GM12878 (cell line): ENCODE measurements at regions of chr5 and their contacts with region 1.

Region 1: DNA sequence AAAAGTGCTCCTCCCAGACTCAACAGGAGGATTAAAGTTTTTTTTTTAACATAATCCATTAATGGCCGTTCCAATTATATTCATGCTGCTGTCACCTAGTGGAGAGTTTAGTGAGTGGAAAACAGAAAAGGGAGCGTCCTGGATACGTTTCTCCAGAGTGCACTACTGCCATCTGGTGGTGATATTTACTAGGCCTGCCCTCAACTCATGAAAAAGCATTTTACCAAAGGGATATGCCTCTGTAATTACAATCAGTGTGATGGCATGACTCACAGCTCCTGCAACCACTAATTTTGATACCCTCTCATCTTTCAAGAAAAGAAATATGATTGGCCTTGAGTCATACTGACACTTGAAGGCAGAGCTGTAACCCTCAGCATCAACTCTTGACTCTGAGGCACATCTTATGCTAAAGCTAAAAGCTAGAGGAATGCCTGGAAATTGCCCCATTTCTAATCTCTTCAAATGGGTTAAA is 20.0 kb downstream of the MINAR2 start:
- DNase-seq: peak; percentile 32
- ATAC-seq: peak; percentile 95
- H3K4me3 ChIP-seq: no peak overlapping the region
- H3K27ac ChIP-seq: no peak overlapping the region
- H3K4me1 ChIP-seq: no peaks in the 10 kb centered on the region
- H3K27me3 ChIP-seq: no peaks in the 10 kb centered on the region
- CTCF ChIP-seq: peak; percentile 84 to 99 (median 98)
- EP300 ChIP-seq: no peak
- POLR2A ChIP-seq: no peak
- RAD21 ChIP-seq: peak; percentile 88

Region 2: DNA sequence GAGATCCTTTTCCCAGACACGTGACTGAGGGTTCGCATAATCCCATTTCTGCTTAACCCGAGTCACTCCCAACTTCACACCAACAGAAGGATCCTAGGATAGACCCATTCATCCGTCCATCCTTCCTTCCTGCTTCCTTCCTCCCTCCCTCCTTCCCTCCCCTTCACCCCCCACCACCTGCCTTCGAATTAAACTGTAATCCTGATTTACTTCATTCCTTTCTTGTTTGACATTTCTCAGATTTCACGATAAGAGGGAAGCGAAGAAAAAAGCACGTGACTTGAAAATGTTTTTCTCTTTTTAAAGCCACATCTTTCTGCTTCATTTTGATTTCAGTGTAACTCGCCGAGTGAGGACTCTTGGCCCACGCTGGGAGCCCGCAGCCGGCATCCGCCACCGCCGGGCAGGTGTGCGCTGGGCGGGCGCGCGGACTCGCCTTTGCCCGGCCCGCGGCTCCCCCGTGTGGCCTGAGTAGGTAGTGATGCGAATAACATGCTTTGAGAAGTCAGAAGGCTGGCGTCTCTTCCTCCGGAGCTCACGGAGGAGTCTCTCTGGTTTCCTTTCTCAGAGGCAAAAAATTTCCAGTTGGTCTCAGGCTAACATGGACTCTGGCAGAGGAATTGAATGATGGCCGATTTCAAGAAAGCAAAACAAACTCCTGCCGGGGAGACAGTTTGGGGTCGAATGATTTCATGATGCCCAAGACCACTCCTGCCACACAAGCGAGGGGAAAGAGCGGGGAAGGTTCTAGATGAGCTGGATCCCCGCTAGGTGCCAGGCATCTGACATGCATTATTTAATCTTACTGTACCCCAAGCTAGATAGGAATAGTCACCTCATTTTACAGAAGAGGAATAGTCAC is 1566.6 kb before region 1 on chr5:
- CTCF ChIA-PET with region 1: no interaction called
- POLR2A ChIA-PET with region 1: no interaction called
- RAD21 ChIA-PET with region 1: no interaction called
- SMC1A ChIA-PET with region 1: no interaction called
- in situ Hi-C with region 1: loop called (anchors 25 kb)
- intact Hi-C with region 1: no loop called
- DNase-seq: no peak
- ATAC-seq: peak; percentile 97
- H3K4me3 ChIP-seq: no peak overlapping the region
- H3K27ac ChIP-seq: no peak overlapping the region
- H3K4me1 ChIP-seq: peaks cover 4% of the 10 kb centered on the region; the same call in 1 of the 2 replicates
- H3K27me3 ChIP-seq: no peaks in the 10 kb centered on the region
- CTCF ChIP-seq: peak; percentile 81 to 90 (median 86)
- EP300 ChIP-seq: no peak
- POLR2A ChIP-seq: no peak
- RAD21 ChIP-seq: peak; percentile 97

Region 3: GRCh38 chr5:128905571-128906110 is 862.3 kb before region 1 on chr5:
- CTCF ChIA-PET with region 1: interaction called, 24 read pairs
- POLR2A ChIA-PET with region 1: no interaction called
- RAD21 ChIA-PET with region 1: no interaction called
- SMC1A ChIA-PET with region 1: interaction called, 3 read pairs
- in situ Hi-C with region 1: loop called (anchors 10 kb)
- intact Hi-C with region 1: loop called (anchors 2 kb)
- DNase-seq: no peak
- ATAC-seq: peak; percentile 95
- H3K4me3 ChIP-seq: no peak overlapping the region
- H3K27ac ChIP-seq: no peak overlapping the region
- H3K4me1 ChIP-seq: no peaks in the 10 kb centered on the region
- H3K27me3 ChIP-seq: no peaks in the 10 kb centered on the region
- CTCF ChIP-seq: peak; percentile 63 to 84 (median 64); a peak in 5 of 6 replicates
- EP300 ChIP-seq: no peak
- POLR2A ChIP-seq: no peak
- RAD21 ChIP-seq: peak; percentile 89

Region 4: GRCh38 chr5:129361440-129362025 is 406.4 kb before region 1 on chr5:
- CTCF ChIA-PET with region 1: interaction called, 10 read pairs
- POLR2A ChIA-PET with region 1: no interaction called
- RAD21 ChIA-PET with region 1: no interaction called
- SMC1A ChIA-PET with region 1: no interaction called
- in situ Hi-C with region 1: no loop called
- intact Hi-C with region 1: loop called (anchors 2 kb)
- DNase-seq: no peak
- ATAC-seq: 0 out of 3 replicates have a peak, but pooled peaks have one; percentile 40
- H3K4me3 ChIP-seq: no peak overlapping the region
- H3K27ac ChIP-seq: no peak overlapping the region
- H3K4me1 ChIP-seq: no peaks in the 10 kb centered on the region
- H3K27me3 ChIP-seq: no peaks in the 10 kb centered on the region
- CTCF ChIP-seq: peak in 2 of 3 experiments; percentile 36 to 42; a peak in 4 of 6 replicates
- EP300 ChIP-seq: no peak
- POLR2A ChIP-seq: no peak
- RAD21 ChIP-seq: peak; percentile 28; the same call in 1 of the 2 replicates

Region 5: DNA sequence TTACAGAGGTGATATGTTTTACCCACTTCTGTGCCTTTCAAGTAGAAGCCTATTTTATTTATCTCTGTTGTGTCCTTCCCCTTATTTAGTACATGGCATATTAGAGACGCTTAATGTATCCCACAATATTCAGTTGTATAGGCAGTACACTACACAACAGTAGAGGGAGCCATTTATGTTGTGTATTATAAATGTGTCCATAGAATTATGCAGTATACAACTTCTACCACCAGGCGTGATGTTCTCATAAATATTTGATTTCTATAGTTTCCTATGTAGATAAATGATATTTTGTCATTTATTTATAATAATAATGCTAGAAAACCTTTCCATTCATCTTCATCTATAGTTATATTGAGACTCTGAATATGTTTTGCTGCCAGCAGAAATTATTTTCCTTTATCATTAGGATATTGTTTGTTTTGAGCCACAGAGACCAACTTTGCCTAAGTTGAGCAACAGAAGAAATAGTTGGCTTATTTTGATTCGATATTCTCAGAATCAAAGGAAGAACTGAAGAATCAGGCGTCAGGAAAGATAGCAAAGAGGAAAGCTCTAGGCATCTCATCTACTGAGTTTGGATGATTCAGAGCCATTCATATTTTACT is 226.2 kb before region 1 on chr5:
- CTCF ChIA-PET with region 1: no interaction called
- POLR2A ChIA-PET with region 1: no interaction called
- RAD21 ChIA-PET with region 1: no interaction called
- SMC1A ChIA-PET with region 1: no interaction called
- in situ Hi-C with region 1: no loop called
- intact Hi-C with region 1: loop called (anchors 5 kb)
- DNase-seq: no peak
- ATAC-seq: peak; percentile 76
- H3K4me3 ChIP-seq: no peak overlapping the region
- H3K27ac ChIP-seq: no peak overlapping the region
- H3K4me1 ChIP-seq: no peaks in the 10 kb centered on the region
- H3K27me3 ChIP-seq: no peaks in the 10 kb centered on the region
- CTCF ChIP-seq: peak in 1 of 3 experiments; percentile 8; a peak in 2 of 6 replicates
- EP300 ChIP-seq: no peak
- POLR2A ChIP-seq: no peak
- RAD21 ChIP-seq: no peak

Region 6: GRCh38 chr5:129844764-129845163 is 76.8 kb after region 1 on chr5:
- CTCF ChIA-PET with region 1: interaction called, 175 read pairs
- POLR2A ChIA-PET with region 1: no interaction called
- RAD21 ChIA-PET with region 1: interaction called, 5 read pairs
- SMC1A ChIA-PET with region 1: interaction called, 74 read pairs
- in situ Hi-C with region 1: no loop called
- intact Hi-C with region 1: no loop called
- DNase-seq: no peak
- ATAC-seq: no peak
- H3K4me3 ChIP-seq: no peak overlapping the region
- H3K27ac ChIP-seq: no peak overlapping the region
- H3K4me1 ChIP-seq: no peaks in the 10 kb centered on the region
- H3K27me3 ChIP-seq: no peaks in the 10 kb centered on the region
- CTCF ChIP-seq: no peak
- EP300 ChIP-seq: no peak
- POLR2A ChIP-seq: no peak
- RAD21 ChIP-seq: no peak

Region 7: GRCh38 chr5:130066644-130067043 is 298.7 kb after region 1 on chr5:
- CTCF ChIA-PET with region 1: no interaction called
- POLR2A ChIA-PET with region 1: no interaction called
- RAD21 ChIA-PET with region 1: no interaction called
- SMC1A ChIA-PET with region 1: no interaction called
- in situ Hi-C with region 1: no loop called
- intact Hi-C with region 1: no loop called
- DNase-seq: no peak
- ATAC-seq: no peak
- H3K4me3 ChIP-seq: no peak overlapping the region
- H3K27ac ChIP-seq: no peak overlapping the region
- H3K4me1 ChIP-seq: no peaks in the 10 kb centered on the region
- H3K27me3 ChIP-seq: no peaks in the 10 kb centered on the region
- CTCF ChIP-seq: no peak
- EP300 ChIP-seq: no peak
- POLR2A ChIP-seq: no peak
- RAD21 ChIP-seq: no peak

Region 8: DNA sequence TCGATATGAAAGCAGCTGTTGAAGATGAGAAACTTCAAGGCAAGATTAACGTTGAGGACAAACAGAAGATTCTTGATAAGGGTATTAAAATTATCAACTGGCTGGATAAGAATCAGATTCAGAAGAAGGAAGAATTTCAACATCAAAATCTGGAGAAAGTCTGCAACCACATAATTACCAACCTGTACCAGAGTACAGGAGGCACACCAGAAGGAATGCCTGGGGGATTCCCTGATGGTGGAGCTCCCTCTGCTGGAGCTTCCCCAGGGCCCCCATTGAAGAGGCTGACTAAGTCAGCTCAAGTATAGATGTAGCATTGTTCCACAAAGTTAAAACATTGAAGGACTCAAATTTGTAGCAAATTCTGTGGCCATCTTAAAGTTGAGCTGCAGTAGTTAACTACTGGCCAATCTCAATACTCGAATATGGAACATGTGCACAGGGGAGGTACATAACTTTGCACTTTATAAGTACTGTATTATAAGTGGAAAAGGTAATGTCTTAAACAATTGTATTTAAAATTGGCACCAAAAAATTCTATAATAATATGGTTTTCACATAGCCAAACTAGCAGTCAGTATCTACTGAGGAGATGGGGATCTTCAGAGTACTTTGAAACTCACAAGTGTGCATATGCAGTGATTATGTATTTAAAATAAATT is 373.8 kb after region 1 on chr5:
- CTCF ChIA-PET with region 1: interaction called, 42 read pairs
- POLR2A ChIA-PET with region 1: no interaction called
- RAD21 ChIA-PET with region 1: interaction called, 8 read pairs
- SMC1A ChIA-PET with region 1: interaction called, 20 read pairs
- in situ Hi-C with region 1: no loop called
- intact Hi-C with region 1: loop called (anchors 2 kb)
- DNase-seq: no peak
- ATAC-seq: peak; percentile 90
- H3K4me3 ChIP-seq: no peak overlapping the region
- H3K27ac ChIP-seq: no peak overlapping the region
- H3K4me1 ChIP-seq: no peaks in the 10 kb centered on the region
- H3K27me3 ChIP-seq: no peaks in the 10 kb centered on the region
- CTCF ChIP-seq: peak; percentile 61 to 68 (median 66)
- EP300 ChIP-seq: no peak
- POLR2A ChIP-seq: no peak
- RAD21 ChIP-seq: peak; percentile 51